ENCODE measurements at regions of chr5 and their contacts with region 1.

Region 1: GRCh38 chr5:68046445-68046844 is 169.1 kb upstream of the PIK3R1 start:
- DNase-seq: peak; percentile 96
- H3K4me3 ChIP-seq: no peak overlapping the region
- H3K27ac ChIP-seq: no peak overlapping the region
- H3K4me1 ChIP-seq: peaks cover 7% of the 10 kb centered on the region
- H3K27me3 ChIP-seq: no peaks in the 10 kb centered on the region
- CTCF ChIP-seq: no peak

Region 2: DNA sequence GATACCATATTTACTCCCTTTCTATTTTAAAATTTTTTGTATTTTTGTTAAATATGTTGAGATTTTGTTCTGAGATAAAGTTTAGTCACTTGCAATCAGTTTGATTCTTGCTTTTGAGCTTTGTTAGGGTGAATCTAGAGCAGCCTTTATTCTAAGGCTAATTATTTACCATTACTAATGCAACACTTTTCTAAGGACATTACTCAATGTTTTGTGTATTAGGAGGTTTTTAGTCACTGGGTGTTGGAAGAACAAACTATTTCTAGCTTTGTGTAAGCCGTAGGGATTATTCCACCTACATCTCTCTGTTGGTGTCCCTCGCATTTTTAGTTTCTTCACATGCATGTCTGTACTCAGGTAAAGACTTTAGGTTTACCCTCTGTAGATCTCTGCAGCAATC is 470.3 kb before region 1 on chr5:
- CTCF ChIA-PET with region 1: no interaction called
- dilution Hi-C with region 1: no loop called
- in situ Hi-C with region 1: no loop called
- intact Hi-C with region 1: loop called (anchors 1 kb)
- DNase-seq: no peak
- H3K4me3 ChIP-seq: no peak overlapping the region
- H3K27ac ChIP-seq: no peak overlapping the region
- H3K4me1 ChIP-seq: peaks cover 9% of the 10 kb centered on the region
- H3K27me3 ChIP-seq: no peaks in the 10 kb centered on the region
- CTCF ChIP-seq: no peak

Region 3: DNA sequence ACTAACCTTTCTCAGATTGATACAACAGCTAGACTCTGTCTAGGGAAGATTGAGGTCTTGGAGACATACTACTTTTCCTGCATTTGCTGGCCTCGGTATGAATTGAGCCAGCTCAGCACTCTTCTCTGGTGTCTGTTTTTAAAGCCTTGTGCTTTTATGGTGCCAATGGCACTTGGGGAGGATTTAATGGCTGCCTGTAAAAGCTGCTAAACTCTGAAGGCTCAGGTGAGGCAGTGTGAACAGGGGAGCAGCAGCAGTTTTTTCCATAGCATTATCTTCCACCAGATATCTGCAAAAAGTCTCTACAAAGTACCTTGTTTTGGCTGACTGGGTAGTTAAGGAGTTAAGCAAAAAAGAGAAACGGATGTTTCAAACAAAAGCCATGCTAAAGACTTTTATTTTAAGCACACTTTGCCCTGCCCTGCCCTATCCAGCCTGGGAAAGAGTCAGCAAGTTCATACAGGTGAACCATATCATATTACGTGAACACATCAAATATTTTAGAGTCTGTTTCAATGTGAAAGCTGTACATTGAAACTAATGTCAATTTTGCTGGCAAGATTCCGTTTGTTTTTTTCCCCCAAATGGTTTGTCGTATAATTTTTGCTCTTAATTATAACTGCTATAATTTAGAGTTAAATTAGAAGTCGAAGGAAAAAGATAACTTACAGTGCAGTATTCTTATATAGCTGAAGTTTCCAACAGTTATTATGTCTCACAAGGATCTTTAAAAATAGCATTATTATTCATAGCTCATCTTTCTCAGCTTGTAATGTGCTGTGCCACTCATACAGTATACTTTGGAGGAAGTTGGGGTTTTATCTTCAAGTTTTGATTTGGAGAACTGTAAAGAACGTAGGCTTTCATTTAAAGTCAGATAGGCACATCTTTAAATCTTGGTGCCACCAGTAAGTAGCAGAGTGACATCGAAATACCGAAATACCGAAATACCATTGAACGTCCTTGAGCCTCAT is 425.7 kb before region 1 on chr5:
- CTCF ChIA-PET with region 1: no interaction called
- dilution Hi-C with region 1: no loop called
- in situ Hi-C with region 1: no loop called
- intact Hi-C with region 1: no loop called
- DNase-seq: peak; percentile 17
- H3K4me3 ChIP-seq: no peak overlapping the region
- H3K27ac ChIP-seq: no peak overlapping the region
- H3K4me1 ChIP-seq: peaks cover 9% of the 10 kb centered on the region
- H3K27me3 ChIP-seq: no peaks in the 10 kb centered on the region
- CTCF ChIP-seq: no peak

Region 4: DNA sequence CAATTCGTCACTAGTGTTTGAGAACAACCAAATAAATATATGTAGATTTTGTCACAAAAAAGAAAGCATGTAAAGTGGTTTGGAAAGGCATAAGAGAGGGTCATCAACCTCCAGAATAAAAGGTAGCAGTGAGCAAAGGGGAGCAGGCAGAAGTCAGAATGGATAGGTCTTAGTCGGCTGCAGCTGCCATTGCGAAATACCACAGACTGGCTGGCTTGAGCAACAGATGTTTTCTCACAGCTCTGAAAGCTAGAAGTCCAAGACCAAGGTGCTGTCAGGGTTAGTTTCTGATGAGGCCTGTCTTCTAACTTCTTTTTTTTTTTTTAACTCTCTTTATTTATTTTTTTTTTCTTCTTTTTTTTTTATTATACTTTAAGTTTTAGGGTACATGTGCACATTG is 39.0 kb before region 1 on chr5:
- CTCF ChIA-PET with region 1: interaction called, 18 read pairs
- dilution Hi-C with region 1: no loop called
- in situ Hi-C with region 1: no loop called
- intact Hi-C with region 1: no loop called
- DNase-seq: peak; percentile 55
- H3K4me3 ChIP-seq: no peak overlapping the region
- H3K27ac ChIP-seq: no peak overlapping the region
- H3K4me1 ChIP-seq: no peaks in the 10 kb centered on the region
- H3K27me3 ChIP-seq: no peaks in the 10 kb centered on the region
- CTCF ChIP-seq: no peak

Region 5: DNA sequence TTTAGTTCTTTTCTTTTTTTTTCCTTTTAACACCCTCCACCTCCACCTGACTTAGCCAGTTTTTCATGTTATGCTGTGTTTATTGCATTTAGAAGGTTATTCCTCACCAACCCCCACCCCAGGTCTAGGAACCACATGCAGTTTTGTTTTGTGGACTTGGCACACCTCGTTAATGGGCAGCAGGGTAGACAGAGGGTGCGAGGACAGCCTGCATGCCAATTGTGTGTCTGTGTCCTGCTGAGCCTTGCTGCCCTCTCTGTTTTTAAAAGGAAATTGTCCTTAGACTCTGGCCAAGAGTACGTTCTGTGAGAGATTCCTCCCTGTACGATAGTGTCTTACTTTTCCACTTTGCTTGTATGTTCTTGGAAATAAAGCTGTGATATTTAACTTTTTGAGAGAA is 183.0 kb after region 1 on chr5:
- CTCF ChIA-PET with region 1: no interaction called
- dilution Hi-C with region 1: no loop called
- in situ Hi-C with region 1: no loop called
- intact Hi-C with region 1: no loop called
- DNase-seq: no peak
- H3K4me3 ChIP-seq: no peak overlapping the region
- H3K27ac ChIP-seq: no peak overlapping the region
- H3K4me1 ChIP-seq: peaks cover 60% of the 10 kb centered on the region
- H3K27me3 ChIP-seq: no peaks in the 10 kb centered on the region
- CTCF ChIP-seq: no peak